Activated naive CD4-positive, alpha-beta T cell treated with anti-CD3 and anti-CD28 coated beads for 36 hours (primary cell): ENCODE measurements at regions of chr2 and their contacts with region 1.

Region 1: DNA sequence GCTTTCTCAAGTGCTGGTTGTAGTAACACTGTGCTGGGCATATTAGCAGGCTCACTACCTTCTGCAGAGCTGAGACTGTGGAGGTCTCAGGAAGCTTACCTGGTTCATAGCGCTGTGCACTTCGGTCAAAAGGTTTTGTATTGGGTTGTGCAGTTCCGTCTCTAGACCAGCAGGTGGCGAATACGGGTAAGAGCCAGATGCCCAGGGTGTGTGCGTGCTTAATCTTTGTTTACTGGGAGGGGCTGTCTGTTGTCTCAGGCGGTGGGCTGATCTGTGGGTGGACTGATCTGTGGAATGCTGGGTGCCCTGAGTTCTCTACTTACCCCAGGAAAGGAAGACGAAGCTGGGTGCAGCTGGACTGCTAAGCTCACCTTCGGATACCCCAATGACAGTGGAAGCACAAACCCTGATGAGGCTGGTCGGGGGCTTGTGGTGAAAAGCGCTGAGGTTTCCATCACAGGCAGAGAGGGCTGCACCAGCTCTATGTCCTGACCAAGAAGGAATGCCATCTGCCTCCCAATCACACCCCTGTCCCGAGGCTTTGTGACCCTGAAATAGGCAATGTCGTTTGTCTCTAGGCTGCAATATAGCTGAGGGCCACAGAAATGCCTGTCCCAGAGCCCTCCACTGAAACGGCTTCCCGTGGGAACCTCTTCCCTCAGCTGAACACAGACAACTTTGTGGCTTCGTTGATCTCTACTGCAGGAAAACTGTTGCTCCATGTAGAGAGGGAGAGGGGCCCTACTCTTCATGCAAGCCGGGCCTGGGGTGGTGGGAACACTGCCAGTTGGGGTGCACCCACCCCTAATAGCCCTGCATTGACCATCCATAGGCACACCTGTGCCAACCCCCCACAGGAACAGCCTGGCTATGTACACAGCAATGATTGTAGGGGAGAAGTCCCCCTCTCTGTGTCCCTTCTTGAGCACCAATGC is 45.9 kb upstream of the FAM117B start:
- DNase-seq: peak; percentile 81
- H3K4me3 Mint-ChIP-seq: no peak overlapping the region
- H3K27ac Mint-ChIP-seq: no peak overlapping the region
- H3K4me1 Mint-ChIP-seq: peaks cover 11% of the 10 kb centered on the region
- H3K27me3 Mint-ChIP-seq: no peaks in the 10 kb centered on the region

Region 2: DNA sequence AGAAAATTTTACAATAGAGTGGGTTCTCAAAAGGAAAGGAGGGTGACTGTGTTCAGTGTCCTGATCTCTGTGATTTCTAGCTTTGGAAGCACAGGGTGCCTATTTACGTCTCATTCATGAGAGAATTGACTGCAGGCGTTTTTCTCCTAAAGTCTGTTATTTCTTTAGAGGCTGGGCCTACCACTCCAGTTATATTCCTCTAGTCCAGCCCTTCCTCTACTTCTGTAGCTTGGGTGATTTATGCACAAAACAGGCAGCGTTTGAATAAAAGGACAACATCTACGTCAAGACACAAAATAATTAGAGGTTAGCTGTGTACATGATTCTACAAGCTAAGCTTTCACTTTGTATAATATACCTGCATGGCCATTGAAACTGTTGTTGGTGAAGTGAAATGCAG is 13.4 kb after region 1 on chr2:
- CTCF ChIA-PET with region 1: interaction called, 25 read pairs
- intact Hi-C with region 1: no loop called
- DNase-seq: no peak
- H3K4me3 Mint-ChIP-seq: no peak overlapping the region
- H3K27ac Mint-ChIP-seq: no peak overlapping the region
- H3K4me1 Mint-ChIP-seq: peaks cover 17% of the 10 kb centered on the region
- H3K27me3 Mint-ChIP-seq: no peaks in the 10 kb centered on the region

Region 3: DNA sequence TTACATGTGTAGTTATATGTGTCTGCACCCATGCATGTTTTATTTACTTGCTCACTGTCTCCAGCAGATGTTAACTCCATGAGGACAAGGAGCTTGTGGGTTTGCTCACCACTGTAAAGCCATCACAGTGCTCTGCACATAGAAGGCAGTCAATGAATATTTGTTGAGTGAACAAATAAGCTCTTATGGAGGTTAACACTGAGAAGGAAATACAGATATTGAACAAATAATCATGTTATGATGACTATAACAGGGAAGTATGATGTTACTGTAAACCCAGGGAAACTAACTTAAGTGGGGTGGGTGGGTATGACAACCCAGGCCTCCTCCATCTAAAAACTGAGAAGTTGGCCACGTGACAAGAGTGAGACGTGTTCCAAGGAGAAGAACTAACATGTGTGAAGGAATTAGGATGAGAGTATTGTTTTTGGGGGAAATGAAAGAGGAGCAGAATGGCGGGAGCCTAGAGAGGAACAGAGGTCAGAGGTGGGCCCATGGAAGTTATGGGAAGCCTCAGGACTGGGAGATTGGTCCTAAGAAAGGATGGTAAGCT is 39.8 kb after region 1 on chr2:
- CTCF ChIA-PET with region 1: interaction called, 21 read pairs
- intact Hi-C with region 1: no loop called
- DNase-seq: no peak
- H3K4me3 Mint-ChIP-seq: no peak overlapping the region
- H3K27ac Mint-ChIP-seq: no peak overlapping the region
- H3K4me1 Mint-ChIP-seq: peaks cover 18% of the 10 kb centered on the region
- H3K27me3 Mint-ChIP-seq: no peaks in the 10 kb centered on the region

Region 4: DNA sequence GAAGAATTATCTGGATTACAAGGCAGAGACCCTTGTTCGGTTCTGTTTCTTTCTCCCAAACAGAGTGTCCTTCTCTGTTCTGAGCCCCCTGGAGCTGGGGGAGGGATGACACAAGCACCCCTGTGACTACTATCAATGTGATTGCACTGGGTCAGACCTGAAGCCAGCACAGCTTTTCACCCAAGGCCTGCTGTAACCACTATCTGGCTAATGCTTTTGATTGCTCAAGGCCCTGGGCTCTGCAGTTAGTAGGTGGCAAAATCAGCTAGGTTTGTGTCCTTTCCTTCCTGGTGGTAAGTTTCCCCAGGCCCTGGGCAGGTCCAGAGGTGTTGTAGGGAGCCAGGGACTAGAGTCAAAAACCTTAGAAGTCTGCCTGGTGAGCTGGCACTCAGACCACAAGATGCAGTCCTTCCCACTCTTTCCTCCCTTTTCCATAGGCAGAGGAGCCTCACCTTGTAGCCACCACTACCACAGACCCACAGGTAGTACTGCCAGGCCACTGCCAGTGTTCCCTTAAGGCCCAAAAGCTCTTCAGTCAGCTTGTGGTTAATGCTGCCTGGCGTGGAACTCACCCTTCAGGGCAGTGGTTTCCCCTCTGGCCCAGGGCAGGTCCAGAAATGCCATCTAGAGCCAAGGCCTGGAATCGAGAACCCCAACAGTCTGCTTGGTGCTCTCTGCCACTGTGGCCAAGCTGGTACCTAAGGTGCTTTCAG is 128.8 kb after region 1 on chr2:
- CTCF ChIA-PET with region 1: interaction called, 4 read pairs
- intact Hi-C with region 1: loop called (anchors 2 kb)
- DNase-seq: peak; percentile 45
- H3K4me3 Mint-ChIP-seq: no peak overlapping the region
- H3K27ac Mint-ChIP-seq: peak overlapping the region; percentile 36
- H3K4me1 Mint-ChIP-seq: peaks cover 57% of the 10 kb centered on the region
- H3K27me3 Mint-ChIP-seq: no peaks in the 10 kb centered on the region

Region 5: GRCh38 chr2:202870431-202871299 is 281.8 kb after region 1 on chr2:
- CTCF ChIA-PET with region 1: interaction called, 30 read pairs
- intact Hi-C with region 1: loop called (anchors 1 kb)
- DNase-seq: peak; percentile 85
- H3K4me3 Mint-ChIP-seq: peak overlapping the region; percentile 88
- H3K27ac Mint-ChIP-seq: peak overlapping the region; percentile 72
- H3K4me1 Mint-ChIP-seq: peaks cover 7% of the 10 kb centered on the region
- H3K27me3 Mint-ChIP-seq: no peaks in the 10 kb centered on the region

Region 6: GRCh38 chr2:203650860-203651613 is 1062.1 kb after region 1 on chr2:
- CTCF ChIA-PET with region 1: no interaction called
- intact Hi-C with region 1: loop called (anchors 5 kb)
- DNase-seq: peak; percentile 26
- H3K4me3 Mint-ChIP-seq: no peak overlapping the region
- H3K27ac Mint-ChIP-seq: no peak overlapping the region
- H3K4me1 Mint-ChIP-seq: peaks cover 25% of the 10 kb centered on the region
- H3K27me3 Mint-ChIP-seq: no peaks in the 10 kb centered on the region